ENCODE measurements at regions of chr3 and their contacts with region 1.

Region 1: DNA sequence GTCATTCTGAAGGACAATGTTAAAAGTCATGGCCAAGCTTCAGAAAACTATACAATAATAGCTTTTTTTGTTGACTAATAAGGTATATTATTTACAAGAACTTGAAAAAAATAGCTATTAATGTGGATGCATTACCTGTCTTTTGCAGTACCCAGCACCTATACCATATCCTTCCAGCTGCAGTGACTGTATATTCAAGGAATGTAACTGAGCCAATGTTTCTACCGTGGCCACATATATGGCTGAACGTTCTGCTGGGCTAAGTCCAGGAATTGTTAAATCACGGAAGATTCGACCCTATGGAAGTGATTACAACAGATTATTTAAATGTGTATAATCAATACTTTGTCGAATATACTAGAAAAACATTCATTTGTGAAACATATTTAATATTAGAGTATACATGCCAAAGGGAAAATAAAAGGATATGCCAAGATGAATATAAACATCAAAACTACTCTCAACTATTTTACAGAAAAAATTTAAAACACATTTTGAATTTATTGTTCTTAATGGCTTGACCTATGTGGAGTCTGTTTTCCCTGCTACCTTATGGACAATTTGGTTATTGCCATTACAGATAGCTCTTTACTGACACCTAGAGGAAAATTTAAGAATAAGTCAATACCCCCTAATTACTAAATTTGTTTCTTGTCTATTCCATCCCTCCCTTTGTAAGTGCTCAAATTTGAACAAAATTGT is 17.6 kb downstream of the ACAD11 start:
- DNase-seq: peak; percentile 58
- H3K4me3 Mint-ChIP-seq: no peak overlapping the region
- H3K27ac Mint-ChIP-seq: no peak overlapping the region
- H3K4me1 Mint-ChIP-seq: peaks cover 11% of the 10 kb centered on the region
- H3K27me3 Mint-ChIP-seq: no peaks in the 10 kb centered on the region
- CTCF ChIP-seq: peak; percentile 54

Region 2: GRCh38 chr3:132416807-132417694 is 224.9 kb before region 1 on chr3 and contains the start of gene DNAJC13:
- CTCF ChIA-PET with region 1: no interaction called
- POLR2A ChIA-PET with region 1: no interaction called
- intact Hi-C with region 1: loop called (anchors 5 kb)
- DNase-seq: peak; percentile 94
- H3K4me3 Mint-ChIP-seq: peak within 1 kb of the TSS; percentile 95
- H3K27ac Mint-ChIP-seq: peak within 1 kb of the TSS; percentile 83
- H3K4me1 Mint-ChIP-seq: peaks cover 10% of the 10 kb centered on the region
- H3K27me3 Mint-ChIP-seq: no peaks in the 10 kb centered on the region
- CTCF ChIP-seq: no peak
- total RNA-seq, gene DNAJC13: 33.0 TPM in 2 replicates

Region 3: DNA sequence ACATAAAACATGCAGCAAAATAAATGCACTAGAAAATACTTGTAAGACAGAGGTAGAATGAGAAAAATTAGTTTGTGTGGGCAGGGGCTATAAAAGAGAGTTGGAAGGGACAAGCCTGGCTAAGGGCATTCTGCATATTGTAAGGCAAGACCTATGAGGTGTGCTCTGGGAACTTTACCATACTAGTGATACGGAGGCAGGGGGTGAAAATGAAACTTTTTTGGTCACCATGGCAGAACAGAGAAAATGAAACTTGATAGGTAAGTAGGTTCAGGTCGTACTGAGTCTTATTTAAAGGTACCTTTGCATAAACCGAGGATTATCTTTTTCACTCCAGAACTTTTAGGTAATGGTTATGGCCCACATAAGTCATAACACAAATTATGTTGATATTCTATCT is 119.6 kb before region 1 on chr3:
- CTCF ChIA-PET with region 1: interaction called, 41 read pairs
- POLR2A ChIA-PET with region 1: no interaction called
- intact Hi-C with region 1: no loop called
- DNase-seq: no peak
- H3K4me3 Mint-ChIP-seq: no peak overlapping the region
- H3K27ac Mint-ChIP-seq: no peak overlapping the region
- H3K4me1 Mint-ChIP-seq: no peaks in the 10 kb centered on the region
- H3K27me3 Mint-ChIP-seq: no peaks in the 10 kb centered on the region
- CTCF ChIP-seq: no peak

Region 4: DNA sequence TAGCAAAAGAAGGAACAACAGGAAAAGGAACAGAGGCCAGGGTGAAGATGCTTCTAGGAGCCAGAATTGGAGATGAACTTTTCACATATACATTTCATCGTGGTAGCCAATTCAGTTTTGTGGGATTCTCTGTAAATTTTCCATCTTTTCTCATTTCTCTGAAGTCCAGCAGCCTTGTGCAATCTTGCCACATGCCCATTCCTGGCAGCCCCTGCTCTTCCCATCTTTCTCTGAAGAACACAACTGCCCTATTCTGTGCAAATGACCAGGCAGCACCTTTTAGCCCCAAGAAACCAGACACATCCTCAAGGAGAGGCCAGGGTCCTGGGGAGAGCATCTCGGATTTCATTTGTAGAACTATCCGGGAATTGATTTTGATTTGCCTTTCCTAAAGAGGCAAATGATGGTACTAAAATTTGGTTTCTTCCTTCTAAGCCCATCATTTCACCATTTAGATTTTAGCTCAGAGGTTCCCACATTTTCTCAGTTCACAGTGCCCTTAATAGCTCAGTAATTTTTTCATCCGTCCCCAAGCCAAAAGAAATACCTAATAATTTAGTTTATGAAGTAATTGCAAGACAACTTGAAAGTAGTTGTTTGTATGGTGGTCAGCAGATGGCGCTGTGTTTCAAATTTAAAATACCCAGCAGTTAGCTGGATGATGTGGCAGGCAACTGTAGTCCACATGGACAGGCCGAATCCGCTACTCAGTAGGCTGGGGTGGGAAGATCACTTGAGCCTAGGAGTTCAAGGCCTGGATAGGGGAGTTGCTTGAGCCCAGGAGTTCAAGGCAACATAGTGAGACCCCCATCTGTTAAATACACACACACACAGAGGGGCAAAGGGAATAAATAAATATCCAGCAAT is 106.2 kb before region 1 on chr3:
- CTCF ChIA-PET with region 1: interaction called, 284 read pairs
- POLR2A ChIA-PET with region 1: interaction called, 9 read pairs
- intact Hi-C with region 1: loop called (anchors 1 kb)
- DNase-seq: peak; percentile 70
- H3K4me3 Mint-ChIP-seq: no peak overlapping the region
- H3K27ac Mint-ChIP-seq: no peak overlapping the region
- H3K4me1 Mint-ChIP-seq: peaks cover 4% of the 10 kb centered on the region
- H3K27me3 Mint-ChIP-seq: no peaks in the 10 kb centered on the region
- CTCF ChIP-seq: peak; percentile 50

Region 5: DNA sequence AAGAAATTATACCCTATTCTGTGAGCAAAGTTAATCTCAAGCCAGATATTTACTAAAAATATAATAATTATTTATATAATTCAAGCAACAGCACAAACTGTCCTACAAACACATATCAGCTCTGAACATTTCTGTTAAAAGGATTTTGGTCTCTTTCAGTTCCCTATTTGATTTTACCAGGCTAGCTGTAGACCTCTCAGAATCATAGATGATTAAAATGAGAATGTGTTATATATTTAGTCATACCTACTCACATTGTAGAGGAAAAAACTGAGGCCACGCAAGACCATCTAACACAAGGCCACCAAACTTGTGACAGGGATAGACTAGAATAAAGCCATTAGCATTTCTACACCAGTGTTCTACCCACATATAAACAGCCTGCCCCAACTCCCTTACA is 16.4 kb before region 1 on chr3:
- CTCF ChIA-PET with region 1: interaction called, 11 read pairs
- POLR2A ChIA-PET with region 1: no interaction called
- intact Hi-C with region 1: no loop called
- DNase-seq: no peak
- H3K4me3 Mint-ChIP-seq: no peak overlapping the region
- H3K27ac Mint-ChIP-seq: no peak overlapping the region
- H3K4me1 Mint-ChIP-seq: peaks cover 8% of the 10 kb centered on the region
- H3K27me3 Mint-ChIP-seq: no peaks in the 10 kb centered on the region
- CTCF ChIP-seq: no peak

Region 6: GRCh38 chr3:132659365-132660051 is 17.5 kb after region 1 on chr3 and contains the start of gene ACAD11:
- CTCF ChIA-PET with region 1: interaction called, 17 read pairs
- POLR2A ChIA-PET with region 1: interaction called, 10 read pairs
- intact Hi-C with region 1: no loop called
- DNase-seq: peak; percentile 72
- H3K4me3 Mint-ChIP-seq: peak within 1 kb of the TSS; percentile 89
- H3K27ac Mint-ChIP-seq: peak within 1 kb of the TSS; percentile 99
- H3K4me1 Mint-ChIP-seq: peaks cover 26% of the 10 kb centered on the region
- H3K27me3 Mint-ChIP-seq: no peaks in the 10 kb centered on the region
- CTCF ChIP-seq: peak; percentile 45
- total RNA-seq, gene ACAD11: 30.9 and 31.9 TPM in 2 replicates

Region 7: GRCh38 chr3:133040696-133041523 is 398.9 kb after region 1 on chr3:
- CTCF ChIA-PET with region 1: no interaction called
- POLR2A ChIA-PET with region 1: no interaction called
- intact Hi-C with region 1: no loop called
- DNase-seq: peak; percentile 84
- H3K4me3 Mint-ChIP-seq: no peak overlapping the region
- H3K27ac Mint-ChIP-seq: no peak overlapping the region
- H3K4me1 Mint-ChIP-seq: no peaks in the 10 kb centered on the region
- H3K27me3 Mint-ChIP-seq: peaks cover 91% of the 10 kb centered on the region
- CTCF ChIP-seq: peak; percentile 79

Measured in MCF 10A (cell line).